Cardiac septum (tissue), 1 donor: ENCODE measurements at regions of chr18 and their contacts with region 1.

Region 1: GRCh38 chr18:45202061-45202460 is 413.2 kb upstream of the SLC14A2 start:
- DNase-seq: no peak

Region 2: DNA sequence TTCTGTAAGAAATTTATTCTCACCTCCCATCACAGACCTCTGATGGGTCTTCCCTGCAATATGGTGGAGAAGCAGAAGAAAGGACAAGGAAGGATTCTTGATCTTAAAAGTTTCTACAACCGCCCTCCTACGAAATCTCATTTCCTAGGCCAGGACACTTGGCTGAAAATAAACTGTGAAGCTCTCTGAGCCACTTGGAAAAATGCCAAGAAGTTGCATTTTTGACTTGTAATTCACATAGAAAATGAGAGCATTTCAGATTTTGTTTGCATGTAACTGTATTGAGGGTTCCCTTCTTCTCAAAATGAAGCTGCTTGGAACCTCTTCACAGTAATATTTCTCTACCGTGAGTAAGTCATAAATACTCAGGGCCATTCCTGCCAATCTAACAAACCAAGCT is 45.1 kb before region 1 on chr18:
- intact Hi-C with region 1: loop called (anchors 10 kb)
- DNase-seq: no peak